ENCODE measurements at regions of chr14 and their contacts with region 1.

Region 1: GRCh38 chr14:70972107-70972976 is 65.1 kb downstream of the PCNX1 start:
- DNase-seq: peak; percentile 90
- ATAC-seq: peak; percentile 81
- H3K4me3 Mint-ChIP-seq: no peak overlapping the region
- H3K27ac Mint-ChIP-seq: peak overlapping the region; percentile 54
- H3K4me1 Mint-ChIP-seq: peaks cover 23% of the 10 kb centered on the region
- H3K27me3 Mint-ChIP-seq: no peaks in the 10 kb centered on the region

Region 2: GRCh38 chr14:70398706-70399431 is 573.5 kb before region 1 on chr14:
- CTCF ChIA-PET with region 1: no interaction called
- POLR2A ChIA-PET with region 1: no interaction called
- DNase-seq: no peak
- ATAC-seq: no peak
- H3K4me3 Mint-ChIP-seq: no peak overlapping the region
- H3K27ac Mint-ChIP-seq: no peak overlapping the region
- H3K4me1 Mint-ChIP-seq: no peaks in the 10 kb centered on the region
- H3K27me3 Mint-ChIP-seq: no peaks in the 10 kb centered on the region

Region 3: GRCh38 chr14:70887207-70887681 is 85.1 kb before region 1 on chr14:
- CTCF ChIA-PET with region 1: interaction called, 10 read pairs
- POLR2A ChIA-PET with region 1: no interaction called
- DNase-seq: no peak
- ATAC-seq: peak; percentile 28
- H3K4me3 Mint-ChIP-seq: peak overlapping the region; percentile 64
- H3K27ac Mint-ChIP-seq: peak overlapping the region; percentile 92
- H3K4me1 Mint-ChIP-seq: peaks cover 97% of the 10 kb centered on the region
- H3K27me3 Mint-ChIP-seq: no peaks in the 10 kb centered on the region

Region 4: GRCh38 chr14:70995676-70996075 is 23.3 kb after region 1 on chr14:
- CTCF ChIA-PET with region 1: interaction called, 10 read pairs
- POLR2A ChIA-PET with region 1: interaction called, 3 read pairs
- DNase-seq: no peak
- ATAC-seq: no peak
- H3K4me3 Mint-ChIP-seq: no peak overlapping the region
- H3K27ac Mint-ChIP-seq: no peak overlapping the region
- H3K4me1 Mint-ChIP-seq: peaks cover 36% of the 10 kb centered on the region
- H3K27me3 Mint-ChIP-seq: no peaks in the 10 kb centered on the region

Region 5: DNA sequence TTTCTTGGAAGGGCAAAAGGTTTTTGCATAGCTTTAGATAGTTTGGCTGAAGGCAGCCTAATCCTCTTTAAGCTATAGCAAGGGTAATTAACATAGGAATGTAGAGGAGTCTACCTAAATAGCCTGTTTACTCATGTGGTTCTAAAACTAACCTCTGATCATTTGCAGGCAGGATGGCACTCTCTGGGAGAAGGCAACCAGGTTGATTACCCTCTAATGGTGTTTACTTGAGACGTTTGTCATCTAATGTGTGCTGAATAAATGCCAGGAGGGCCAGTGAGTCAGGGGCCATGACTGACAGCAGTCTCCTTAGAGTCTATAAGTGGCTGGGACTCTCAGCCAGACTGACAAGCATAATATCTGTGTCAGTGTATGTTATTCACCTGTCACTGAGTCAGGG is 221.3 kb after region 1 on chr14:
- CTCF ChIA-PET with region 1: no interaction called
- POLR2A ChIA-PET with region 1: no interaction called
- DNase-seq: no peak
- ATAC-seq: no peak
- H3K4me3 Mint-ChIP-seq: no peak overlapping the region
- H3K27ac Mint-ChIP-seq: no peak overlapping the region
- H3K4me1 Mint-ChIP-seq: no peaks in the 10 kb centered on the region
- H3K27me3 Mint-ChIP-seq: peaks cover 21% of the 10 kb centered on the region

Region 6: DNA sequence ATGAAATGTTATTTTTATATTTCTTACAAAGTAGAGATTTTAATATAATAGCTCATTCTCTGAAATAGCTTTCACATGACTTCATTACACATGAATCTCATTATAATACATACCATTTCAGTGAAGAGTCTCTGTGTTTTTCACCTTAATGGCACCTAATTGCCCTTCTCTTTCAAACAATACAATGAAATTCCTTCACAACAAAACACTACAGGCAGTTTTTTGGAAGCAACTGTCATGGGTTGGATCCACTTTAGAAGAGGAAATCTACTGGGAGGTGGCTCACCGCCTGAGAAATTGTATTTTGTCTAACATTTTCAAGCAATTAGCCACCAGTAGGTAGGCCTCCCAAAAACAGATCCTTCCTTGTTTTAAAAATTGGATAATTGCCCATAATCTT is 919.6 kb after region 1 on chr14:
- CTCF ChIA-PET with region 1: no interaction called
- POLR2A ChIA-PET with region 1: no interaction called
- DNase-seq: no peak
- ATAC-seq: no peak
- H3K4me3 Mint-ChIP-seq: no peak overlapping the region
- H3K27ac Mint-ChIP-seq: no peak overlapping the region
- H3K4me1 Mint-ChIP-seq: no peaks in the 10 kb centered on the region
- H3K27me3 Mint-ChIP-seq: peaks cover 4% of the 10 kb centered on the region